MCF 10A (cell line): ENCODE measurements at regions of chr14 and their contacts with region 1.

Region 1: GRCh38 chr14:68548194-68549056 is 244.4 kb downstream of the ZFP36L1 start:
- DNase-seq: peak; percentile 98
- H3K4me3 Mint-ChIP-seq: peak overlapping the region; percentile 69
- H3K27ac Mint-ChIP-seq: peak overlapping the region; percentile 98
- H3K4me1 Mint-ChIP-seq: peaks cover 86% of the 10 kb centered on the region
- H3K27me3 Mint-ChIP-seq: no peaks in the 10 kb centered on the region
- CTCF ChIP-seq: no peak

Region 2: DNA sequence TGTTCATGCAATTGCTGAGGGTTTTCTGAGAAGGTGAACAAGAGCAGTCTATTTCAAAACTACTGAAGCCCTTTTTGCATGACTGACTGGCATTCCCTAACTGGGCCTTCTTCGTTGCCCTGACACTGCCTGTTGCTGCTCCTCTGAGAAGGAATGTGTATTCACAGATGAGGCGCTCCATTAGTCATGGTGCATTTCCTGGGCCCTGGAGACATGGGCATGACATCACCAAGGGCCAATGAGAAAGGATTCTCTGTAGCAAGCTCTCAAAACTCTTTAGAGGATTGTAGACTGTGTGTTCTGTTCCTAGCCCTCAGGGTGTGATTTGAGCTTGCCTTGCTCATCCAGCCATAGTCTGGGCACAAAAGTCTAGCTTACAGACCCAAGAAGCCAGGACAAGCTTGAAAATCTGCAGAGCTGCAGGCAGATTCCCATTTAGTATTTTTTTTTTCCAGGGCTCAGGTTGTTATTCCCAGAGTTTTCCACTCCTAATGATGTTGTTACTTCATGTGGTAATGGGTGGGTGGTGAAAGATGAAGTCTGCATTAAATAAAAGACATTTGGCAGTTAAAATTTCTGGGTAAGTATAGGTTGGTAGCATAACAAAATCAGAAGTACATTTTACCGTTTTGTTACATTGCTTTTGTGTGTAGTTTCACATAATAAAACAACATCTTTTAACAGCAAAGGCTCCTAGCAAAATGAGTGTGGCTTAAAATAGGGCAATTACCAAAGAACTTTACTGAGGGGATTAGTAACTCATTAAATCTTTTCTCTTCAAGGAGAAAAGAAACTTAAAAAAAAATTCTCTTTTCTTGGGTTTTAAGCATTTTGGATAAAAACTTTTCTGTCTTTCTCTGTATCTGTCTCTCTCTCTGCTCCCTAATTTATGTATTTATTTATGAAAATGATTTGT is 410.5 kb before region 1 on chr14:
- CTCF ChIA-PET with region 1: no interaction called
- POLR2A ChIA-PET with region 1: interaction called, 5 read pairs
- intact Hi-C with region 1: loop called (anchors 5 kb)
- DNase-seq: peak; percentile 98
- H3K4me3 Mint-ChIP-seq: peak overlapping the region; percentile 16
- H3K27ac Mint-ChIP-seq: peak overlapping the region; percentile 94
- H3K4me1 Mint-ChIP-seq: peaks cover 50% of the 10 kb centered on the region
- H3K27me3 Mint-ChIP-seq: no peaks in the 10 kb centered on the region
- CTCF ChIP-seq: no peak

Region 3: GRCh38 chr14:68458840-68459469 is 89.5 kb before region 1 on chr14:
- CTCF ChIA-PET with region 1: no interaction called
- POLR2A ChIA-PET with region 1: interaction called, 68 read pairs
- intact Hi-C with region 1: loop called (anchors 1 kb)
- DNase-seq: peak; percentile 94
- H3K4me3 Mint-ChIP-seq: peak overlapping the region; percentile 48
- H3K27ac Mint-ChIP-seq: peak overlapping the region; percentile 89
- H3K4me1 Mint-ChIP-seq: peaks cover 34% of the 10 kb centered on the region
- H3K27me3 Mint-ChIP-seq: no peaks in the 10 kb centered on the region
- CTCF ChIP-seq: no peak

Region 4: GRCh38 chr14:68520637-68521556 is 27.5 kb before region 1 on chr14:
- CTCF ChIA-PET with region 1: interaction called, 4 read pairs
- POLR2A ChIA-PET with region 1: interaction called, 101 read pairs
- intact Hi-C with region 1: no loop called
- DNase-seq: peak; percentile 83
- H3K4me3 Mint-ChIP-seq: peak overlapping the region; percentile 28
- H3K27ac Mint-ChIP-seq: peak overlapping the region; percentile 98
- H3K4me1 Mint-ChIP-seq: peaks cover 34% of the 10 kb centered on the region
- H3K27me3 Mint-ChIP-seq: no peaks in the 10 kb centered on the region
- CTCF ChIP-seq: no peak

Region 5: DNA sequence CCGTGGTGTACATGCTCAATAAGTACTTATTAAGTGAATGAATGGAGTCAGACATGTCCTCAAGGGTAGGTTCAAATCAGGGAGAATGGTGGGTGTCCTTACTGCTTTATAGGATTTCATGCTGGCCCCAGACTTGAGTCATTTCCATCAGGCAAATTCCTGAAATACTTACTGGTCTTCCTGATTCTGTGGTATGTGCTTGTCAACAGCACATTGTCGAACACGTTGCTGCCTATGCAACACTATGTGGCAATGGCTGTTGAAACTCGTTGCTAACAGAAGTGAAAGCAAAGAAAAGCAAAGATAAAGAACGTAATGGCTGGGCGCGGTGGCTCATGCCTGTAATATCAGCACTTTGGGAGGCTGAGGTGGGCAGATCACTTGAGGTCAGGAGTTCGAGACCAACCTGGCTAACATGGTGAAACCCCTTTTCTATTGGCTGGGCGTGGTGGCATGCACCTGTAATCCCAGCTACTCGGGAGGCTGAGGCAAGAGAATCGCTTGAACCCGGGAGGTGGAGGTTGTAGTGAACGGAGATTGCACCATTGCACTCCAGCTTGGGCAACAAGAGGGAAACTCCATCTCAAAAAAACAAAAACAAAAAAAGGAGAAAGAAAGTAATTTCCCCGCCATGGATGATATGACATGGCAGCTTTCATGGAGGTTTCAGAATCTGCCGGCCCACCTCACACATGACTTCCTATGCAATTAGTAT is 29.6 kb after region 1 on chr14:
- CTCF ChIA-PET with region 1: interaction called, 3 read pairs
- POLR2A ChIA-PET with region 1: interaction called, 11 read pairs
- intact Hi-C with region 1: loop called (anchors 1 kb)
- DNase-seq: peak; percentile 93
- H3K4me3 Mint-ChIP-seq: peak overlapping the region; percentile 61
- H3K27ac Mint-ChIP-seq: peak overlapping the region; percentile 97
- H3K4me1 Mint-ChIP-seq: peaks cover 42% of the 10 kb centered on the region
- H3K27me3 Mint-ChIP-seq: no peaks in the 10 kb centered on the region
- CTCF ChIP-seq: no peak

Region 6: DNA sequence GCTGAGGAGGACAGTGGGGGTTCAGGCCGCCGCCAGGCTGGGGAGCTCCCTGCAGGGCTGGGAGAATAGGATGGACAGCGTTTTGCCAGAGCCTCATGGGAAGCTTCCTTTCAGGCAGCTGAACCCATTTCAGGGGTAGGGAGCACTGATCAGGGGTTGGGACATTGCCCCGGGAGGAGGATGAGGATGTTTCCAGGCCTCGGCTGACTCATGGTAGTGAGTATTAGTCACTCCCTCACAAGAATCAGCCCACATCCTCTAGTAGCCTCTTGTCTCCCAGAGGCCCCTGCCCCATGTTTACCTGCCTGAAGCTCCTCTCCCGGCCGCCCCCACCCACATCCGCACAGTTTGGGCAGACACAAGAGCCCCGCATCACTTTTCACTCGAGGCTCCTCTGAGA is 154.7 kb after region 1 on chr14:
- CTCF ChIA-PET with region 1: no interaction called
- POLR2A ChIA-PET with region 1: interaction called, 10 read pairs
- intact Hi-C with region 1: no loop called
- DNase-seq: peak; percentile 91
- H3K4me3 Mint-ChIP-seq: no peak overlapping the region
- H3K27ac Mint-ChIP-seq: peak overlapping the region; percentile 67
- H3K4me1 Mint-ChIP-seq: peaks cover 43% of the 10 kb centered on the region
- H3K27me3 Mint-ChIP-seq: no peaks in the 10 kb centered on the region
- CTCF ChIP-seq: no peak

Region 7: DNA sequence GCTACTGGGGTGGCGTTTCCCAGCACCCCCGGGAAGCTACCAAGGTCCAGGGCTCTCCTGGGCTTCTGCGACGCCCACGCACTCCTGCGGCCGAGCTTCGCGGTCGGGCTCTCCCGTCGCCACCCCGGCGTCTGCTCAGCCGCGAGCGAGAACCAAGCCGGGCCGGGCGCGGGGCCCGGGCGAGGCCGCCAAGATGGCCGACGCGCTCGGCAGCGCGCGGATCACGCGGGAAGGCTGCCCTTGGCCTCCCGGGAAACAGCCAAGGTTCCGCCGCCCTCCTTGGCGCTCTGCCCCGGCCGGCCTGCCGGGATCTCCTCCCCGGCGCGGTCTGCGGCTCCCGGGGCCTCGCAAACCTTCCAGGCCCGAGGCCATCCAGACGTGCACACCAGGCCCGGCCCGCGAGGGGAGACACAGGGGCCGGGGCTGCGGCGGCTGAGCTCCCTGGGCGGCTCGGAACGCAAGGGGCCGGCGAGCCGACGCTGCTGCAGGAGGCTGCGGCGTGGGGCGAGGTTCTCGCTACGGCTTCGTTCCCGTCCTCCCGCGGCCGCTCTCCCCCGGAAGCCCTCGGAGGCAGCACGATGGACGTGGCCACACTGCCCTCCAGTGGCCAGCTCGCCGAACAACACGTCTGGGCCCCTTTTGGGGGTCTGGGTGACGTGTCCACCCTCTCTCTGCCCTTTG is 268.0 kb after region 1 on chr14:
- CTCF ChIA-PET with region 1: interaction called, 5 read pairs
- POLR2A ChIA-PET with region 1: interaction called, 14 read pairs
- intact Hi-C with region 1: no loop called
- DNase-seq: peak; percentile 85
- H3K4me3 Mint-ChIP-seq: peak overlapping the region; percentile 49
- H3K27ac Mint-ChIP-seq: peak overlapping the region; percentile 88
- H3K4me1 Mint-ChIP-seq: peaks cover 20% of the 10 kb centered on the region
- H3K27me3 Mint-ChIP-seq: no peaks in the 10 kb centered on the region
- CTCF ChIP-seq: peak; percentile 98